Activated naive CD4-positive, alpha-beta T cell treated with anti-CD3 and anti-CD28 coated beads for 36 hours (primary cell): ENCODE measurements at regions of chr3 and their contacts with region 1.

Region 1: GRCh38 chr3:56894881-56895431 is 93.2 kb upstream of the ARHGEF3 start:
- DNase-seq: peak; percentile 60
- H3K4me3 Mint-ChIP-seq: peak overlapping the region; percentile 12
- H3K27ac Mint-ChIP-seq: peak overlapping the region; percentile 30
- H3K4me1 Mint-ChIP-seq: peaks cover 68% of the 10 kb centered on the region
- H3K27me3 Mint-ChIP-seq: no peaks in the 10 kb centered on the region

Region 2: DNA sequence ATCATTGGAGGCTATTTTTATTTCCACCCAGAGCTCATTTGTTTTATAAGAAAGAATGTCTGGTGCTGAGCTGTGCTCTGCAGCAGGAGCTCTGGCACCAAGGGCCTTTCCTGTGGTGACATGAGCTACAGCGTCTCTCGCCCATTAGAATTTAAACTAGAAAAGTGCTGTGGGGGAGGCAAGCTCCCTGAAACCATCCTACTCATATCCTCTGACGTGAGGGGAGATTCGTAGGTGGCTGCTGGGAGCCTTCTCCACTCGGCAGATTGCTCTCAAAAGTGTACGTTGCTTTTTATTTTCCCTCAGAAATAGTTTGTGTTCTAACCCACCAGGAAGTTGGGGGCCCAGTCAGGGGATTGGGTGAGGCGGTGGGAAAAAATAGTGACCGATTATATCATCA is 16.9 kb before region 1 on chr3:
- CTCF ChIA-PET with region 1: no interaction called
- intact Hi-C with region 1: loop called (anchors 2 kb)
- DNase-seq: peak; percentile 84
- H3K4me3 Mint-ChIP-seq: peak overlapping the region; percentile 52
- H3K27ac Mint-ChIP-seq: peak overlapping the region; percentile 94
- H3K4me1 Mint-ChIP-seq: peaks cover 90% of the 10 kb centered on the region
- H3K27me3 Mint-ChIP-seq: no peaks in the 10 kb centered on the region